ENCODE measurements at regions of chr13 and their contacts with region 1.

Region 1: DNA sequence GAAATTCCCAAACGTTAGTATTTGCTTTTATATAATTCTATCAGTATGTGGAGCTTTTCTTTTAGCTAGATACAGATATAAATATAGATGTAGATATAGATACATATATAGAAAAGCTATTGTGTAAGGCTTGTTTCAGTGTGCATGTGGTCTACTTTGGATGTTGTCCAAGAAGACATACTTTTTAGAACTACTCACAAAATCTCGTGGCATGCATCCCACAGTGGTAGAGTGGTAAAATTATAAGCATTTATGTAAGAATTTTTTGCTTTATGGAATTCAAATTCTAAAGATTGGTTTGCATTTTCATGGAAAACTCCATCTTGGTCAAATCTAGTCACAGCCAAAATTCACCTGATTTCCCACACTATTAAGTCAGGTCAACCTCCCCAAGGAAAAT is 880.4 kb downstream of the EFNB2 start:
- DNase-seq: no peak
- H3K4me3 ChIP-seq: no peak overlapping the region
- H3K4me3 Mint-ChIP-seq: no peak overlapping the region
- H3K27ac Mint-ChIP-seq: no peak overlapping the region
- H3K4me1 ChIP-seq: no peaks in the 10 kb centered on the region
- H3K4me1 Mint-ChIP-seq: no peaks in the 10 kb centered on the region
- H3K27me3 ChIP-seq: no peaks in the 10 kb centered on the region
- H3K27me3 Mint-ChIP-seq: peaks cover 2% of the 10 kb centered on the region
- CTCF ChIP-seq: no peak

Region 2: GRCh38 chr13:104641335-104641734 is 1013.7 kb before region 1 on chr13:
- CTCF ChIA-PET with region 1: no interaction called
- POLR2A ChIA-PET with region 1: no interaction called
- intact Hi-C with region 1: loop called (anchors 10 kb)
- DNase-seq: no peak
- H3K4me3 ChIP-seq: no peak overlapping the region
- H3K4me3 Mint-ChIP-seq: no peak overlapping the region
- H3K27ac Mint-ChIP-seq: no peak overlapping the region
- H3K4me1 ChIP-seq: no peaks in the 10 kb centered on the region
- H3K4me1 Mint-ChIP-seq: no peaks in the 10 kb centered on the region
- H3K27me3 ChIP-seq: no peaks in the 10 kb centered on the region
- H3K27me3 Mint-ChIP-seq: peaks cover 3% of the 10 kb centered on the region
- CTCF ChIP-seq: no peak